ENCODE measurements at regions of chr3 and their contacts with region 1.

Region 1: GRCh38 chr3:98602078-98602678 is 8.8 kb upstream of the CPOX start:
- DNase-seq: peak in 2 of 5 donors; percentile 24 to 41
- ATAC-seq: peak; percentile 64 to 93 (median 85)
- H3K4me3 ChIP-seq: no peak overlapping the region
- H3K27ac ChIP-seq: no peak overlapping the region
- H3K4me1 ChIP-seq: peaks cover 0 to 9% (median 0%) of the 10 kb centered on the region in 12 donors
- H3K27me3 ChIP-seq: no peaks in the 10 kb centered on the region
- CTCF ChIP-seq: peak; percentile 61 to 83 (median 75)
- POLR2A ChIP-seq: no peak

Region 2: DNA sequence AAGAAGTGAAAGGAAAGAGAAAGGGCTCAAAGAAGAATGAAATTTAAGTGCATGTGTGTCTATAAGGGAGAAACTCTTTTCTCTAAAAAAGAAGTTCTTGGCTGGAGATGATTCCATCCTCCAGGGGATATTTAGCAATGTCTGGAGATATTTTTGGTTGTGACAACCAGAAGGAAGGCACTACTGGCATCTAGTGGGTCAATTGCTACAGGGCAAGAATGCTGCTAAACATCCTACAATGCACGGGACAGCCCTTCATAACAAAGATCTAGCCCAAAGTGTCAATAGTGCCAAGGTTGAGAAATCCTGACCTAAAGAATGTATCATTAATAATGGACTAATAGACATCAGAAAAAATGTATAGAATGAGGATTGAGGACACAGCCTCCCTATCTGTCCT is 103.5 kb after region 1 on chr3:
- intact Hi-C with region 1: loop called in 3 of 10 experiments (anchors 5 to 10 kb)
- DNase-seq: no peak
- ATAC-seq: no peak
- H3K4me3 ChIP-seq: no peak overlapping the region
- H3K27ac ChIP-seq: no peak overlapping the region
- H3K4me1 ChIP-seq: peaks cover 0 to 27% (median 10%) of the 10 kb centered on the region in 12 donors
- H3K27me3 ChIP-seq: no peaks in the 10 kb centered on the region
- CTCF ChIP-seq: peak in 2 of 12 donors; percentile 17 to 25
- POLR2A ChIP-seq: no peak

Region 3: DNA sequence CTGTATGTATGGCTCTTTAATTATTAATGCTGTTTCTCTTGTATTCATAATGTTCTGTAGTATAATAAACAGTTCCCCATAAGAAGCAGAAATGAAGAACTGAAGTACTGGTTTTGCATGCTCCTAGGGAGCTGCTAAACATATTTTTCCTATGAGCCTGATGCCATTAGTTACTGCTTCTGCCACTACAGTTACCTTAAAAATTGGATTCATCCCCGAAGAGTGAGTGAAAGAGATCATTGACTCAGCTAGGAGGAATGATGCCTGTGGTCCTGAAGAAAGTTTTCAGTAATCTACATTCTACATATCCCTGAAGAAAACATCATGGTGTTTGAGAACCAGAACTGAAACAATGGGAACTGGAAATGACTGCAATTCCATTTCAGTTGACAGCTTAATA is 123.9 kb after region 1 on chr3:
- intact Hi-C with region 1: loop called in 2 of 10 experiments (anchors 2 to 10 kb)
- DNase-seq: no peak
- ATAC-seq: no peak
- H3K4me3 ChIP-seq: no peak overlapping the region
- H3K27ac ChIP-seq: no peak overlapping the region
- H3K4me1 ChIP-seq: peaks cover 0 to 5% (median 0%) of the 10 kb centered on the region in 12 donors
- H3K27me3 ChIP-seq: no peaks in the 10 kb centered on the region
- CTCF ChIP-seq: no peak
- POLR2A ChIP-seq: no peak

Region 4: GRCh38 chr3:98791341-98792325 is 189.5 kb after region 1 on chr3:
- intact Hi-C with region 1: loop called in 1 of 10 experiments (anchors 5 kb)
- DNase-seq: no peak
- ATAC-seq: no peak
- H3K4me3 ChIP-seq: no peak overlapping the region
- H3K27ac ChIP-seq: no peak overlapping the region
- H3K4me1 ChIP-seq: peaks cover 0 to 24% (median 17%) of the 10 kb centered on the region in 12 donors
- H3K27me3 ChIP-seq: no peaks in the 10 kb centered on the region
- CTCF ChIP-seq: no peak
- POLR2A ChIP-seq: no peak

Region 5: GRCh38 chr3:98809557-98809956 is 207.4 kb after region 1 on chr3:
- intact Hi-C with region 1: loop called (anchors 1 to 5 kb)
- DNase-seq: peak in 4 of 5 donors; percentile 31 to 59 (median 50)
- ATAC-seq: peak; percentile 65 to 93 (median 90)
- H3K4me3 ChIP-seq: no peak overlapping the region
- H3K27ac ChIP-seq: peak overlapping the region in 8 of 12 donors; percentile 14 to 72 (median 40)
- H3K4me1 ChIP-seq: peaks cover 0 to 23% (median 6%) of the 10 kb centered on the region in 12 donors
- H3K27me3 ChIP-seq: no peaks in the 10 kb centered on the region
- CTCF ChIP-seq: no peak
- POLR2A ChIP-seq: no peak

Region 6: DNA sequence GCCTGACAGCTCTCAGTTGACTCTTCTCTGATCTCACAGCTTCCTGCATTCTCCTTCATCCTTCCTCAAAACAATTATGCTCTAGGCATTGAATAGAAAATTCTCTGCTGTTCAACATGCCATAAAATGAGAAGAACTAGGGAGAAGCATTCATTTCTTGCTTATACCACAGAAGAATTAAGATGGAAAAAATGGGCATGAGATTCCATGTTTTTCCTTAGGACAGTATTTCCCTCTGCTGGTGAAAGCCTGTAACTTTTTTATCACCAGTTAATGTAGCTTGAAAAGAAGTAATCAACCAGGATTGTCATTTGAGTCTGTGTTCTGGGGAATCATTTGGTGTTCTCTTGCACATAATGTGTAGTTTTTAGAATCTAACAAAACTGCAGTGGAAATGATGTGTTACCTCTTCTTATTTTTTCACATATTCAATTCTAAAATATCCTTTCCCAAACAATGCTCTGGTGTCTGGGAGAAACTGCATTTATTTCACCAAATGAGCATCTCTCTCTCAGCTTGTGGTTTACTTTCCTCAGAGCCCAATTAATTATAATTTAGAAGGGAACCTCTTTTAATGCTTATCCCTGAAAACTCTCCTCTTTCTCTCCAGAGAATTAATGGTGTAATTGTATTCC is 392.1 kb after region 1 on chr3:
- intact Hi-C with region 1: loop called in 9 of 10 experiments (anchors 5 to 10 kb)
- DNase-seq: no peak
- ATAC-seq: peak in 2 of 4 donors; percentile 29 to 48
- H3K4me3 ChIP-seq: no peak overlapping the region
- H3K27ac ChIP-seq: no peak overlapping the region
- H3K4me1 ChIP-seq: no peaks in the 10 kb centered on the region
- H3K27me3 ChIP-seq: no peaks in the 10 kb centered on the region
- CTCF ChIP-seq: peak; percentile 45 to 81 (median 72)
- POLR2A ChIP-seq: no peak

Region 7: DNA sequence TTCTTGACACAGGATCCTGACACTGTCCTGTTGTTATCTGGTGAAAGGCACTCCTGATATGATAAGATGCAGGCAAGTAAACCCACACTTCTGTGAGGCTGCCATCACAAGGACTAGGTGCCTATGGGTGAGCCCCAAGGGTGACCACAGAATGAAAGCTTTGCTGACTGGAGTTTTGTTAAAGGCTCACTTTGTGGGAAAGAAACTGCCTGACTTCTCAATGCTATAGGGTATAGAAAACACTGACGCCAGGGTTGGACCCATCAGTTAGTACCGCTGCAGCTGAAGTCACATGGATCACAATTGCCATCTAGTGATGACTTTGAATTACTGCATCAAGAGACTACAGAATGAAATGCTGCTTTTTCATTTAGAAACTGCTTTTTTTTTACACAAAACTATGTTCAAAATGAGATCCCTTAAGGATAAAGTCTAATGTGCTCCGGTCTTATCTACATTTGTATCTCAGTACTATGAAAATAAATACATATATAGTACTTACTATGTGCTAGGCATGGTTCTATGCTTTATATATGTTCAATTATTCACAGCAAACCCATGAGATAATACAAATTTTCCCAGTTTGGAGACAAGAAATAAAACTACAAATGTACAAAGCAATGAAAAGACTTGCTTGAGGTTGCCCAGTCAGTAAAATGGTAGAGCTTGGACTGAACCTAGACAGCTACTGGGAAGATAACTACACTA is 1151.2 kb after region 1 on chr3:
- intact Hi-C with region 1: loop called in 1 of 10 experiments (anchors 5 kb)
- DNase-seq: peak in 2 of 5 donors; percentile 15 to 27
- ATAC-seq: peak; percentile 69 to 86 (median 77)
- H3K4me3 ChIP-seq: no peak overlapping the region
- H3K27ac ChIP-seq: no peak overlapping the region
- H3K4me1 ChIP-seq: peaks cover 0 to 20% (median 1%) of the 10 kb centered on the region in 12 donors
- H3K27me3 ChIP-seq: no peaks in the 10 kb centered on the region
- CTCF ChIP-seq: peak; percentile 57 to 82 (median 71)
- POLR2A ChIP-seq: no peak

Measured in heart left ventricle (tissue), 16 donors.